Naive thymus-derived CD4-positive, alpha-beta T cell (primary cell): ENCODE measurements at regions of chr10 and their contacts with region 1.

Region 1: DNA sequence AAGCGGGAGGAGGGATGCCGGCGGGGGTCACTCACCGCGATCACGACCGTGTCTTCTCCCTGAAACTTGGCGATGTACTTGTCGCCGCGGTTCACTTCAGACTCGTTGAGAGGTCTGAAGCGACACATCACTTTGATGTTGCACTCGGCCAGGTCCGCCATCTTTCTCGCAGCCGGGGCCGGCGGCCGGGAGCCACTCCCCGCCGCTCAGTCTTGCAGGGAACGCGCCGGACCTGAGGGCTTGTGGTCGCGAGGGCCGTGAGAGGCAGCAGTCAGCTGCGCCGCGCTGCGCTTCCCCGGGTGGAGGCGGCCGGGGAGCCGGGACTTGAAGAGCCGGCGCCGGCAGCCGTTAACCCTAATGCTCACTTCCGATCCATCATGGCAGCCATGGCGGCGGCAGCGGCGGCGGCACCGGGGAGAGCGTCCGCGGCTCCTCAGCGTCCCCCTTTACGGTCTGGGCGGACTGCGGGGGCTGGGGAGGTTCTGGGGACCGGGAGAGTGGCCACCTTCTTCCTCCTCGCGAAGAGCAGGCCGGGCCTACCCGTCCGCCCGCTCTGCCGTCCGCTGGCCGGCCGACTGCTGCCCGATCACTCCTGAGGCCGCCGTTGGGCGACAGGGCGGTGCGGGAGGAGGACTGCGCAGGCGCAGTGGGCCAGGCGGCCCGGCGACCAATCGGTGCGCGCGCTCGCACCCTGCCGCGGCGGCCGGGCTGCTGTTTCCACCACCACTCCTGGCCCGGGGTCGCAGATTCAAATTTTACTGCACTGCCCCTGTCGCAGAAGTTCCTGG is at the start of gene KIF5B:
- DNase-seq: peak; percentile 77 to 95 (median 90)
- ATAC-seq: peak; percentile 87
- H3K4me3 ChIP-seq: peak within 1 kb of the TSS; percentile 71
- H3K4me3 Mint-ChIP-seq: peak within 1 kb of the TSS; percentile 94 to 99 (median 96)
- H3K27ac ChIP-seq: peak within 1 kb of the TSS; percentile 83
- H3K27ac Mint-ChIP-seq: peak within 1 kb of the TSS; percentile 90 to 97 (median 93)
- H3K4me1 ChIP-seq: peaks cover 30 to 34% of the 10 kb centered on the region in 2 donors
- H3K4me1 Mint-ChIP-seq: peaks cover 33 to 55% (median 47%) of the 10 kb centered on the region in 7 donors
- H3K27me3 ChIP-seq: no peaks in the 10 kb centered on the region
- H3K27me3 Mint-ChIP-seq: no peaks in the 10 kb centered on the region
- total RNA-seq, gene KIF5B: 42.2 to 66.0 (median 46.3) TPM

Region 2: DNA sequence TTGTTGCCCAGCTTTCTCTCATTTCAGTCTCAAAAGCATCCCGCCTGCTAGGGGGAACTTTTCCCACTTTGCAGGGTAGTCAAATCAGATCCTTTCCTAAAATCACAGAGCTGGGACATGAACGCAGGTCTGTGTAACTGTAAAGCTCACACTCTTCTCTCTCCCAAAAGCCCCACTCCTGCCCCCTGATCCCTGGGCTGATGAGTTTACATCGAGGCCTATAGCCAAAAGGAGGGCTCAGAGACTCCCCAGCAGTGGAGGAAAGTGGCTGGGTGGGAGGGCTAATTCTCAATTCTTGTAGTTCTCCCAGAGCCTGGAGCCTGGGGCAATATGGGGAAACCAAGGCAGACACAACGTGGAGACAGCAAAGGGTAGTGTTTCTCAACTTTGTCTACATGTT is 1700.4 kb before region 1 on chr10:
- CTCF ChIA-PET with region 1: no interaction called
- POLR2A ChIA-PET with region 1: no interaction called
- intact Hi-C with region 1: no loop called
- DNase-seq: no peak
- ATAC-seq: no peak
- H3K4me3 ChIP-seq: no peak overlapping the region
- H3K4me3 Mint-ChIP-seq: no peak overlapping the region
- H3K27ac ChIP-seq: no peak overlapping the region
- H3K27ac Mint-ChIP-seq: no peak overlapping the region
- H3K4me1 ChIP-seq: no peaks in the 10 kb centered on the region
- H3K4me1 Mint-ChIP-seq: peaks cover 0 to 6% (median 4%) of the 10 kb centered on the region in 7 donors
- H3K27me3 ChIP-seq: no peaks in the 10 kb centered on the region
- H3K27me3 Mint-ChIP-seq: peaks cover 0 to 21% (median 4%) of the 10 kb centered on the region in 5 donors

Region 3: GRCh38 chr10:30433730-30434272 is 1622.2 kb before region 1 on chr10 and contains the start of gene MAP3K8:
- CTCF ChIA-PET with region 1: no interaction called
- POLR2A ChIA-PET with region 1: no interaction called
- intact Hi-C with region 1: loop called in 1 of 2 experiments (anchors 10 kb)
- DNase-seq: peak; percentile 52 to 92 (median 59)
- ATAC-seq: peak; percentile 86
- H3K4me3 ChIP-seq: peak within 1 kb of the TSS; percentile 69
- H3K4me3 Mint-ChIP-seq: peak within 1 kb of the TSS; percentile 82 to 93 (median 89)
- H3K27ac ChIP-seq: peak within 1 kb of the TSS; percentile 68
- H3K27ac Mint-ChIP-seq: peak within 1 kb of the TSS; percentile 23 to 94 (median 70)
- H3K4me1 ChIP-seq: peaks cover 21 to 22% of the 10 kb centered on the region in 2 donors
- H3K4me1 Mint-ChIP-seq: peaks cover 37 to 62% (median 46%) of the 10 kb centered on the region in 7 donors
- H3K27me3 ChIP-seq: no peaks in the 10 kb centered on the region
- H3K27me3 Mint-ChIP-seq: no peaks in the 10 kb centered on the region
- total RNA-seq, gene MAP3K8: 0.70 to 102 (median 31.2) TPM

Region 4: DNA sequence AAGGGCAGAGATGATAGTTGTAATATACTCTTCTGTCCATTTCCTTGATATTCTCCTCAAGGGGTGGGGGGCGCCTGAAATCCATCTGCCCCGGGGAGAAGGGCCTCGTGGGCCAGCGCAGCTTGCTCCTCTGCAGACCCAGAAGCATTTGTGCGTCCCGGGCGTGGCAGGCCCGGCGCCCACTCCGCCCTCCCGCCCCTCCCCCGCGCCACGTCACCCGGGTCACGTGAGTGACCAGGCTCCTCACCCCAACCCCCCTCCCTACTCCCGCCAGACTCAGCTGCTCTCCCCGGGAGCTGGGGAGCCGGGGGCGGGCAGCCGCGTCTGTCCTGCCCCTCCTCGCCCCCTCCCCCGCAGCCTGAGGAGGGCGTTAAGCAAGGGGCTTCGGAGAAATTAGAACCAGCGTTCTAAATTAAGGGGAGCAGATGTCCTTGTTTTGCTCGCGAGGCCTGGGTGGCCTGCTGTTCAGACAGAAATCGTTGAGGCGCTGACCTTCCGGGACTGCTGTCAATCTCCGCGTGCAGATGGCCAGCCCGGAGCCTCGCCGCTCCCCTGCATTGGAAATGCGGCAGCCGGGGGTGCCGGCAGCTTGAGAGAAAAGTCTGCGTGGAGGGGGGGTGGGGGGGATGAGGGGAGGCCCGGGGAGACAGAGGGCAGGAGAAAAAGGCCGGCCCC is 922.2 kb before region 1 on chr10:
- CTCF ChIA-PET with region 1: no interaction called
- POLR2A ChIA-PET with region 1: no interaction called
- intact Hi-C with region 1: loop called in 1 of 2 experiments (anchors 10 kb)
- DNase-seq: peak; percentile 14 to 67 (median 38)
- ATAC-seq: peak; percentile 78
- H3K4me3 ChIP-seq: peak overlapping the region; percentile 66
- H3K4me3 Mint-ChIP-seq: peak overlapping the region; percentile 71 to 87 (median 82)
- H3K27ac ChIP-seq: peak overlapping the region; percentile 80
- H3K27ac Mint-ChIP-seq: peak overlapping the region; percentile 72 to 92 (median 87)
- H3K4me1 ChIP-seq: peaks cover 0 to 33% of the 10 kb centered on the region in 2 donors
- H3K4me1 Mint-ChIP-seq: peaks cover 18 to 68% (median 44%) of the 10 kb centered on the region in 7 donors
- H3K27me3 ChIP-seq: no peaks in the 10 kb centered on the region
- H3K27me3 Mint-ChIP-seq: no peaks in the 10 kb centered on the region

Region 5: DNA sequence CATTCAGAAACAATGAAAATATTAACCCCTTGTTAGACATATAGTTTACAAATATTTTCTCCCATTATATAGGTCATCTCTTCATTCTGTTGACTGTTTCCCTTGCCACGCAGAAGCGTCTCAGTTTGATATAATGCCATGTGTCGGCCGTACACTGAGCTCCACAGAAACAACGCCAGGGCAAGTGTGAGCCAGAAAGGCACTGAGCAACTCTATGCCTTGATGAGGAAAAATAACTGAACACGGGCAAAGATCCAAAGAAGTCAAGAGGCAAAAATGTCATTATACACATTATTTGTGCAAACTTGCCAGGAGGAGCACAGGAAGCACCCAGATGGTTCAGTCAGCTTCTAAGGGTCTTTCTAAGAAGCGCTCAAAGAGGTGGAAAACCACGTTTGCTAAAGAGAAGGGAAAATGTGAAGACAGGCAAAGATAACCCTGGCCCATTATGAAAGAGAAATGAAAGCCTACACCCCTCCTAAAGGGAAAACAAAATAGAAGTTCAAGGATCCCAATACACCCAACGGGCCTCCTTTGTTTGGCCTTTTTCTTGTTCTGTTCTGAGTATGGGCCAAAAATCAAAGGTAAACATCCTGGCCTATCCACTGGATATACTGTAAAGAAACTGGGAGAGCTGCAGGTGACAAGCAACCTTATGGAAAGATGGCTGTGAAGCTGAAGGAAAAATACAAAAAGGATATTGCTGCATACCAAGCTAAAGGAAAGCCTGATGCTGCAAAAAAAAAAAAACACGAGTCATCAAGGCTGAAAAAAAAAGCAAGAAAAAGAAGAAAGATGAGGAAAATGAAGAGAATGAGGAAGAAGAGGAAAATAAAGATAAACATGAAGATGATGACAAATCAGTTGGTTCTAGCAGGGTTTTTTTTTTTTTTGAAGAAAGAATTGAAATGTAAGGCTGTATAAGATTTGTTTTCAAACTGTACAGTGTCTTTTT is 142.8 kb before region 1 on chr10:
- CTCF ChIA-PET with region 1: no interaction called
- POLR2A ChIA-PET with region 1: no interaction called
- intact Hi-C with region 1: no loop called
- DNase-seq: no peak
- ATAC-seq: no peak
- H3K4me3 ChIP-seq: no peak overlapping the region
- H3K4me3 Mint-ChIP-seq: peak overlapping the region in 7 of 10 donors; percentile 20 to 51 (median 33)
- H3K27ac ChIP-seq: no peak overlapping the region
- H3K27ac Mint-ChIP-seq: peak overlapping the region in 7 of 9 donors; percentile 5 to 43 (median 34)
- H3K4me1 ChIP-seq: peaks cover 3 to 7% of the 10 kb centered on the region in 2 donors
- H3K4me1 Mint-ChIP-seq: peaks cover 17 to 89% (median 78%) of the 10 kb centered on the region in 7 donors
- H3K27me3 ChIP-seq: no peaks in the 10 kb centered on the region
- H3K27me3 Mint-ChIP-seq: no peaks in the 10 kb centered on the region

Region 6: GRCh38 chr10:32005050-32005449 is 51.0 kb before region 1 on chr10:
- CTCF ChIA-PET with region 1: no interaction called
- POLR2A ChIA-PET with region 1: interaction called, 3 read pairs
- intact Hi-C with region 1: loop called in 1 of 2 experiments (anchors 5 kb)
- DNase-seq: peak in 7 of 9 donors; percentile 27 to 46 (median 40)
- ATAC-seq: peak; percentile 79
- H3K4me3 ChIP-seq: no peak overlapping the region
- H3K4me3 Mint-ChIP-seq: no peak overlapping the region
- H3K27ac ChIP-seq: no peak overlapping the region
- H3K27ac Mint-ChIP-seq: peak overlapping the region in 4 of 9 donors; percentile 36 to 85 (median 76)
- H3K4me1 ChIP-seq: no peaks in the 10 kb centered on the region
- H3K4me1 Mint-ChIP-seq: peaks cover 0 to 20% (median 13%) of the 10 kb centered on the region in 7 donors
- H3K27me3 ChIP-seq: no peaks in the 10 kb centered on the region
- H3K27me3 Mint-ChIP-seq: no peaks in the 10 kb centered on the region

Region 7: DNA sequence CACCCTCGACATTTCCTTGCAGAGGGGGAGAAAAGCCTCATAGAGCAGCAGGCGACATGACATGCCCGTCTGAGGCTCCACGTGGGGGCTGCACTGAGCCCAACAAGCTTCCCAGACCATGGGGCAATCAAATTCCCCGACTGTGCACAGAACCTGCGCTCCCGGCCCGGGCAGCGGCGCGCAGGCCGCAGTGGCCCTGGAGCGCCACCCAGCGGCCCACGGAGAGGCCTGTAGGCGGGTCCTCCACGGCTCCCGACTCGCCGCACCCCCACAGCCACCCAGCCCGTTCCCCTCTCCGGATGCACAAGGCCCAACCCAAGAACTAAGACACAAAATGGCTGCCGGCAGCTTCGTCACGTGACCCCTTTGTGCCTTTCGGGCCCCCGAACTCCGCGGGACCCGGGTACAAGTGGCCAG is 290.1 kb after region 1 on chr10:
- CTCF ChIA-PET with region 1: no interaction called
- POLR2A ChIA-PET with region 1: interaction called, 3 read pairs
- intact Hi-C with region 1: loop called (anchors 1 kb)
- DNase-seq: peak in 8 of 9 donors; percentile 93 to 98 (median 97)
- ATAC-seq: peak; percentile 92
- H3K4me3 ChIP-seq: peak overlapping the region; percentile 98
- H3K4me3 Mint-ChIP-seq: peak overlapping the region; percentile 86 to 97 (median 93)
- H3K27ac ChIP-seq: peak overlapping the region; percentile 99
- H3K27ac Mint-ChIP-seq: peak overlapping the region; percentile 99 to 100 (median 100)
- H3K4me1 ChIP-seq: peaks cover 42 to 50% of the 10 kb centered on the region in 2 donors
- H3K4me1 Mint-ChIP-seq: peaks cover 35 to 77% (median 73%) of the 10 kb centered on the region in 7 donors
- H3K27me3 ChIP-seq: no peaks in the 10 kb centered on the region
- H3K27me3 Mint-ChIP-seq: no peaks in the 10 kb centered on the region

Region 8: DNA sequence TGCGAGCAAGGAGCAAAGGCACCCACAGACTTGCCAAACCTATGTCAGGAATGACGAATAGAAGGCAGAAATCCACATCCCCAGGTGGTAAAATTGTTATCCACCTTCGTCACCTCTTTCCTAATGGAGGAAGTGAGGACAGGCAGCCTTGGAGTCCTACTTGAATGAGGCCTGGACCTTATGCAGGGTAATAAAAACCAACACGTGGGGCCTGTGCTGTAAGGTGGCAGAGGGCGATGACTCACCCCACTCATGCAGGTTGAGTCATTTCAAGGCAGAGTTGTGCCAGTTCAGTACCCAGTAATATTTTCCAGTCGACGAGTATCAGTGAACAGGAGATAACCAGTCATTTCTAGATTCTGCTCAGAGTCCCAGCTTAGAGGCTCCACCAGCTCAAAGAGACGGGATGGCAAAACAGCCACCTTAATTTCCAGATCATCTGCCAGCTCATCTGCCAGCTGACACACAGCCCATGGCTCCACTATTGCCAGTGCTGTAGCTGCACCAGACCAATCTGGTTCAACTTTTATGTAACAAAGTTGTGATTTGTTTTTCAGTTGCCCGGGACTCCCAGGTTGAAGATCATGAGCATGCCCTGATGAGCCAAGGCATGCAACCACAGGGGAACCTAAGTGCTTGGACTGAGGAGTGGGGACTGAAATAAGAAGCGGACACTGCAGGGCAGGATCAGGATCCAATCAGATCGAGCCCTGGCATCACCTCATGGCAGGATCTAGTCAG is 1078.2 kb after region 1 on chr10:
- CTCF ChIA-PET with region 1: interaction called, 3 read pairs
- POLR2A ChIA-PET with region 1: no interaction called
- intact Hi-C with region 1: loop called (anchors 5 to 10 kb)
- DNase-seq: peak in 2 of 9 donors; percentile 61 to 64
- ATAC-seq: peak; percentile 58
- H3K4me3 ChIP-seq: no peak overlapping the region
- H3K4me3 Mint-ChIP-seq: peak overlapping the region in 2 of 10 donors; percentile 27 to 50
- H3K27ac ChIP-seq: no peak overlapping the region
- H3K27ac Mint-ChIP-seq: peak overlapping the region in 8 of 9 donors; percentile 54 to 95 (median 82)
- H3K4me1 ChIP-seq: peaks cover 35 to 85% of the 10 kb centered on the region in 2 donors
- H3K4me1 Mint-ChIP-seq: peaks cover 25 to 78% (median 57%) of the 10 kb centered on the region in 7 donors
- H3K27me3 ChIP-seq: no peaks in the 10 kb centered on the region
- H3K27me3 Mint-ChIP-seq: no peaks in the 10 kb centered on the region